HepG2 (cell line): ENCODE measurements at regions of chr10 and their contacts with region 1.

Region 1: DNA sequence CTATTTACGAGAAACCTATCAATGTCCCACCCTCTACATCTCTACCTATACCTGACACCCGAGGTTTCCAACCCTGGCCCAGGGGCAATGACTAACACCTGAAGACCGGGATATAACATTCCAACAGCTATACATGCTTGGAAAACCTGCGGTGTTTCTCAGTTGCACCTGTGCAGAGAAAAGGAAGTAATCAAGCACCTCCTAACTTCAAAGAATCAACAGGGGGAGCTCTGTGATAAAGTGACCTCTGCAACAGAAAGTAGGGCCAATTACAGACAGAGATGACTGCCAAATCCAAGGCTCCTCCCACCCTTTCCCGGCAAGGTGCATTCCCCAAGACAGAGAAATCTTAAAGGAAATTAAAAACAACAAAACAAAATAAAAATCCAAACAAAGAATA is 41.3 kb downstream of the CCDC6 start:
- DNase-seq: peak; percentile 33
- ATAC-seq: peak; percentile 76
- H3K4me3 ChIP-seq: no peak overlapping the region
- H3K27ac ChIP-seq: no peak overlapping the region
- H3K4me1 ChIP-seq: peaks cover 7% of the 10 kb centered on the region; the same call in 1 of the 2 replicates
- H3K27me3 ChIP-seq: no peaks in the 10 kb centered on the region
- CTCF ChIP-seq: peak; percentile 54
- EP300 ChIP-seq: no peak
- POLR2A ChIP-seq: no peak
- RAD21 ChIP-seq: peak; percentile 59; the same call in 1 of the 2 replicates

Region 2: DNA sequence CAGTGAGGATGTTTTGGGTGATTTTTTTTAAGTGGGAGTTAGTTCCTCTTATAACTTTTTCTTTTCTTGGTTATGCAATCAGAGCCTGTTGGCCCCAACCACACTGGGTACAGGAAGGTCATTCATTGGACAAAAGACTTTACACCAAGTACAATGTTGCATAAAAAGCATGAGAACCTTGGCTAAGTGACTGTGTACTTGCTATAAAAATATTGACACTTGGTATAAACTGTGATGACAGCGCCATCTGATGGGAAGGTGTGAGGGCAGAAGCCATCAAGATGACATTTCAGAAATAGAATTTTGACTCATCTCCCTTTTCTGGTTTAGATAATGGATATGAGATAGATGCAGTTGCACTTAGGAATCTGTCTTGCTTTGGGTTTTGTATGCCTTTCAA is 167.6 kb after region 1 on chr10:
- CTCF ChIA-PET with region 1: interaction called, 5 read pairs
- POLR2A ChIA-PET with region 1: no interaction called
- in situ Hi-C with region 1: loop called (anchors 25 kb)
- intact Hi-C with region 1: loop called (anchors 1 kb)
- DNase-seq: peak; percentile 62
- ATAC-seq: peak; percentile 77
- H3K4me3 ChIP-seq: no peak overlapping the region
- H3K27ac ChIP-seq: no peak overlapping the region
- H3K4me1 ChIP-seq: no peaks in the 10 kb centered on the region
- H3K27me3 ChIP-seq: no peaks in the 10 kb centered on the region
- CTCF ChIP-seq: peak; percentile 71
- EP300 ChIP-seq: no peak
- POLR2A ChIP-seq: no peak
- RAD21 ChIP-seq: peak; percentile 36; the same call in 1 of the 2 replicates

Region 3: GRCh38 chr10:60446851-60447250 is 581.8 kb after region 1 on chr10:
- CTCF ChIA-PET with region 1: no interaction called
- POLR2A ChIA-PET with region 1: no interaction called
- in situ Hi-C with region 1: no loop called
- intact Hi-C with region 1: no loop called
- DNase-seq: no peak
- ATAC-seq: no peak
- H3K4me3 ChIP-seq: no peak overlapping the region
- H3K27ac ChIP-seq: no peak overlapping the region
- H3K4me1 ChIP-seq: no peaks in the 10 kb centered on the region
- H3K27me3 ChIP-seq: no peaks in the 10 kb centered on the region
- CTCF ChIP-seq: no peak
- EP300 ChIP-seq: no peak
- POLR2A ChIP-seq: no peak
- RAD21 ChIP-seq: no peak